Mammary epithelial cell (primary cell): ENCODE measurements at regions of chr2 and their contacts with region 1.

Region 1: DNA sequence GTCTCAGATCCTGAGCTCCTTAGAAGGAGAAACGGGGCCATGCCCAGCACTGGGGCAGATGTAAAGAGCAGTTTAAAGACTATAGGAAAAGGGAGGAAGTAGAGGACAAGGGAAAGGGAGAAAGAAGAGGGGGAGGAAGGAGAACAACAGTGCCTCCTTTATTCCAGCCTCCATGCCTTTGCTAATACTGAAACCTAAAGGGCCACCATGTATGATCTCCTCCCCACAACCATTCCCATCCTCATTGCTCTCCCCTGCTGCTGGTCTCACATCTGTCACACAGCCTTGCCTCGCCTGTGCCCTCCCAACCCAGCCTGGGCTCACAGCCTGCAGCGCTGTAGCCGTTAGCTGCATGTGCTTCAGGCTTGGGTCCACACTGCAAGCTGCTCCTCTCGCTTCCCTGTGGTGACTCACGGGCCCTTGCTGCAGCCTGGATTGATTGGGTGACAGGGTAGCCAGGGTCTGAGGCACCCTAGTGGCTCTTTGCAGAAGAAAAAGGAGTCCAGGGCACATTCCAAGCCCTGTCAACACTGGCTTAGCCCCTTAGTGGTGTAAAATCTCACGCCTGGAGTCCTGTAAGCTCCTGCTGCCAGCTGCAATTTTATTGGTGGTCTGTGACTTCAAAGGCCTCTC is 281.9 kb downstream of the SRBD1 start:
- DNase-seq: peak; percentile 4
- H3K4me3 ChIP-seq: no peak overlapping the region
- H3K27ac ChIP-seq: no peak overlapping the region
- H3K4me1 ChIP-seq: no peaks in the 10 kb centered on the region
- H3K27me3 ChIP-seq: no peaks in the 10 kb centered on the region
- CTCF ChIP-seq: no peak

Region 2: GRCh38 chr2:44510246-44510645 is 818.9 kb before region 1 on chr2:
- CTCF ChIA-PET with region 1: no interaction called
- dilution Hi-C with region 1: no loop called
- in situ Hi-C with region 1: no loop called
- intact Hi-C with region 1: no loop called
- DNase-seq: peak; percentile 38
- H3K4me3 ChIP-seq: no peak overlapping the region
- H3K27ac ChIP-seq: no peak overlapping the region
- H3K4me1 ChIP-seq: peaks cover 4% of the 10 kb centered on the region
- H3K27me3 ChIP-seq: no peaks in the 10 kb centered on the region
- CTCF ChIP-seq: no peak

Region 3: DNA sequence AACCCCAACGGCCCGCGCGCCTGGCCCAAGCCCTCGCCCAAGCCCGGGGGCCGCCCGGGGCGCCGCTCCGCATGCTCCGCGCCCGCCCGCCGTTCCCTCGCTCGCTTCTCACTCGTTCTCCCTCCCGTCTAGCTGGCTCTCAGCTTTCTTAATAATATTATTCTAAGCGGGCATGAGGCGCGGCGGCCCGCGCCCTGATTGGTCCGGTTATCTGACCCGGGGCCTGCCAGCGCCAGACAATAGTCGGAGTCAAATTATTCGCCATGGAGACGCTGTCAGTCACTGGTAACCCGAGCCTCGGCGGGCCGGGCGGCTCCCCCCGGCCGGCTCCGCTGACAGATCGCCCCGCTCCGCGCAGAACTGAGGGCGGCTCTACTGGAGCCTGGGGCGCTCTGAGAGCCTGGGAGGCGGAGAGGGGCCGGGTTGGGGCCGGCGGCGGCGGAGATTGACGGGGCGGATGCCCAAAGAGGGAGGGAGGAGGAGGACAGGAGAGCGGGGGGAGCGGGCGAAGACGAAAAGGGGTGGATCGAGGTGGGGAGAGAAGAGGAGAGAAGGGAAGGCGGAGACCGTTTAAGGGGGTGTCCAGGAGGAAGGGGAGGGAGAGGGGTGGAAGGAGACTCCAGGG is 319.7 kb before region 1 on chr2 and contains the start of gene SIX2:
- CTCF ChIA-PET with region 1: no interaction called
- dilution Hi-C with region 1: no loop called
- in situ Hi-C with region 1: no loop called
- intact Hi-C with region 1: loop called (anchors 10 kb)
- DNase-seq: peak; percentile 97
- H3K4me3 ChIP-seq: peak within 1 kb of the TSS; percentile 43 to 46 (median 45)
- H3K27ac ChIP-seq: no peak within 1 kb of the TSS
- H3K4me1 ChIP-seq: peaks cover 31% of the 10 kb centered on the region
- H3K27me3 ChIP-seq: peaks cover 49% of the 10 kb centered on the region
- CTCF ChIP-seq: no peak
- total RNA-seq, gene SIX2: not detected